K562 (cell line): ENCODE measurements at regions of chr7 and their contacts with region 1.

Region 1: DNA sequence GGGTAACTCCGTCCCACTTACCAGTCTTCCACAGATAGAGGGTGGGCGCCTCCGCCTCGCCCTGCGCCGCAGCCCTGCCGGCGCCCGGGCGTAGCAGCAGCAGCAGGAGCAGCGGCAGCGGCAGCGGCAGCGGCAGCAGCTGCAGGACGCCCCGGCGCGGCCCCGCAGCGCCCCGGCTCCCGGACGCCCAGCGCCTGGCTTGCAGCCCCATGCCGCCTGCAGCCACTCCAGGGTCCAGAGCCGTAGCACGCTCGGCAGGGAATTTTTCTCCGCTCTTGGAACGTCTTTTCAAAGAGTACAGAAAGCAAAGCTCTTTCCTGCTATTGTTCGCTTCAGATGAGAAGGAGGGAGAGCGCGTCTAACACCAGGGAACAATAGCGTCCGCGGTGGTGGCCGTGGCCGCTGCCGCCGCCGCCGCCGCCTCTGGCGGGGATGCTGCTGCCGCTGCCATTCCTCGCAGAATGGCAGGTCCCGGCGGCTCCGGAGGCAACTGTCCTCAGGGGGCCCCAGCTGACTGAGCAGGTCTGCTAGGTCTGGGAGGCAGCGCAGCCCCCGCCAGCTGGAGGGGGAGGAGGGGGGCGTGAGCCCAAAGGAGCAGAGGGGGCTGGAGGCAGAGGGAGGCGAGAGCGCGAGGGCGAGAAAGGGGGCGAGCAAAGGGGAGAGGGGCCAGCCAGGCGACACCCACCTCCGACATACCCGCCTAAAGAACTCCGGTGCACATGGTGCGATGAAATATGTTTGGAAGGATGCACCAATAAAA is at the start of gene THSD7A:
- DNase-seq: no peak
- ATAC-seq: no peak
- H3K4me3 ChIP-seq: no peak within 1 kb of the TSS
- H3K27ac ChIP-seq: no peak within 1 kb of the TSS
- H3K4me1 ChIP-seq: peaks cover 0 to 5% of the 10 kb centered on the region in 2 experiments; a peak in 1 of 5 replicates
- H3K27me3 ChIP-seq: no peaks in the 10 kb centered on the region
- CTCF ChIP-seq: no peak
- EP300 ChIP-seq: no peak
- POLR2A ChIP-seq: no peak
- RAD21 ChIP-seq: no peak
- polyA plus RNA-seq, gene THSD7A: not detected

Region 2: DNA sequence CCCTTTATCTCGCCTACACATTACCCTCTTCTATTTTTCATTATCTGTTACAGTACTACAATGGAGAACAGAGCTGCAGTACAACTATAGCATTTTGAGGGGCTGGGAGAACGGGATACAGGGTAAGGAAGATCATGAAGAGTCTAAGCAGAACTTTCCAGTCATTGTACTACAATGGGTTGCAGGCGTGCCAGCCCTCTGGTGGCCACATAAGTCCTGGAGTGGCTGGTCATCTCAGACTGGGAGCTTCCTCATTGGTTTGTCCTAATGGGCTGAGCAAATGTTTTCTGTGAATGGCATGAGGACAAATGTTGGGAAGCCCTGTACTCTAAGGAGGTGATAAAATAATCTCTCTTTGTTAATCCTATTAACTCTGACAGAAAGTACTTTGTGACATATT is 412.2 kb after region 1 on chr7:
- CTCF ChIA-PET with region 1: no interaction called
- POLR2A ChIA-PET with region 1: no interaction called
- in situ Hi-C with region 1: no loop called
- intact Hi-C with region 1: no loop called
- DNase-seq: peak in 3 of 4 experiments; percentile 10 to 57 (median 37)
- ATAC-seq: peak; percentile 98
- H3K4me3 ChIP-seq: no peak overlapping the region
- H3K27ac ChIP-seq: no peak overlapping the region
- H3K4me1 ChIP-seq: no peaks in the 10 kb centered on the region
- H3K27me3 ChIP-seq: no peaks in the 10 kb centered on the region
- CTCF ChIP-seq: peak; percentile 49 to 59 (median 58)
- EP300 ChIP-seq: no peak
- POLR2A ChIP-seq: no peak
- RAD21 ChIP-seq: peak in 1 of 2 experiments; percentile 53; a peak in 2 of 4 replicates

Region 3: DNA sequence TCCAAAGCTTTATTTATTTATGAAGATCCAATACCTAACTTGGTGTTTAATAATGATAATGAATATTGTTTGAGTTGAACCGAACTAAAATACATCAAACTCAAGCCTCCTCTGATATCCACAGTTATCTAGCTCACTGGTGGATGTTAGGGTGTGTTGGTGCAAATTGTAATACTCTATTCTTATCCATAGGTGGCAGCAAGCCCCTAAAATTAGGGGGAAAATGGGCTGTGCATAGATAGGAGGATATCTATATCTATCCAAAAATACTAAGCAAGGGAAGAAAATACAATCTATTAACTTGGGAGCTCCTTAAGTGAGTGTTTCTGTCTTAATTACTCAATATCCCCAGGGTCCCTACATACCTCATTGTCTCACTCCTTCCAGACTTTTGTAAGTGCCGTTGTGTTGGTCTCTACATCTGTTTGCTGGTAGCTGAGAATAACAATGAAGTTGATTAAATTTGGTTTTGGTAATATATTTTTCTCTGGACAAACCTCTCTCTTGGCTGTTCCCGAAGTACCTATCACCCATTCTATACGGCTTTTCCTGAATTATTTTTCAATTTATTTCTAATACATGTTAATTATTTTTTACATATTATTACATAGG is 626.7 kb after region 1 on chr7:
- CTCF ChIA-PET with region 1: no interaction called
- POLR2A ChIA-PET with region 1: no interaction called
- in situ Hi-C with region 1: no loop called
- intact Hi-C with region 1: loop called (anchors 10 kb)
- DNase-seq: peak; percentile 40 to 71 (median 56)
- ATAC-seq: peak; percentile 99
- H3K4me3 ChIP-seq: no peak overlapping the region
- H3K27ac ChIP-seq: no peak overlapping the region
- H3K4me1 ChIP-seq: no peaks in the 10 kb centered on the region
- H3K27me3 ChIP-seq: no peaks in the 10 kb centered on the region
- CTCF ChIP-seq: peak; percentile 74 to 89 (median 78)
- EP300 ChIP-seq: no peak
- POLR2A ChIP-seq: no peak
- RAD21 ChIP-seq: peak; percentile 79 to 93